IMR-90 (cell line): ENCODE measurements at regions of chr6 and their contacts with region 1.

Region 1: GRCh38 chr6:28225056-28225834 is at the start of gene ZSCAN9:
- DNase-seq: peak; percentile 89
- ATAC-seq: peak; percentile 93
- H3K4me3 ChIP-seq: peak within 1 kb of the TSS; percentile 82
- H3K27ac ChIP-seq: peak within 1 kb of the TSS; percentile 61
- H3K4me1 ChIP-seq: no peaks in the 10 kb centered on the region
- H3K27me3 ChIP-seq: no peaks in the 10 kb centered on the region
- CTCF ChIP-seq: no peak
- POLR2A ChIP-seq: no peak
- RAD21 ChIP-seq: 0 out of 2 replicates have a peak, but pooled peaks have one; percentile 10
- total RNA-seq, gene ZSCAN9: 16.9 and 17.7 TPM in 2 replicates

Region 2: GRCh38 chr6:28235912-28236452 is 10.7 kb after region 1 on chr6:
- CTCF ChIA-PET with region 1: interaction called, 4 read pairs
- POLR2A ChIA-PET with region 1: interaction called, 17 read pairs
- dilution Hi-C with region 1: no loop called
- in situ Hi-C with region 1: no loop called
- intact Hi-C with region 1: no loop called
- DNase-seq: no peak
- ATAC-seq: no peak
- H3K4me3 ChIP-seq: no peak overlapping the region
- H3K27ac ChIP-seq: no peak overlapping the region
- H3K4me1 ChIP-seq: no peaks in the 10 kb centered on the region
- H3K27me3 ChIP-seq: no peaks in the 10 kb centered on the region
- CTCF ChIP-seq: no peak
- POLR2A ChIP-seq: no peak
- RAD21 ChIP-seq: no peak

Region 3: DNA sequence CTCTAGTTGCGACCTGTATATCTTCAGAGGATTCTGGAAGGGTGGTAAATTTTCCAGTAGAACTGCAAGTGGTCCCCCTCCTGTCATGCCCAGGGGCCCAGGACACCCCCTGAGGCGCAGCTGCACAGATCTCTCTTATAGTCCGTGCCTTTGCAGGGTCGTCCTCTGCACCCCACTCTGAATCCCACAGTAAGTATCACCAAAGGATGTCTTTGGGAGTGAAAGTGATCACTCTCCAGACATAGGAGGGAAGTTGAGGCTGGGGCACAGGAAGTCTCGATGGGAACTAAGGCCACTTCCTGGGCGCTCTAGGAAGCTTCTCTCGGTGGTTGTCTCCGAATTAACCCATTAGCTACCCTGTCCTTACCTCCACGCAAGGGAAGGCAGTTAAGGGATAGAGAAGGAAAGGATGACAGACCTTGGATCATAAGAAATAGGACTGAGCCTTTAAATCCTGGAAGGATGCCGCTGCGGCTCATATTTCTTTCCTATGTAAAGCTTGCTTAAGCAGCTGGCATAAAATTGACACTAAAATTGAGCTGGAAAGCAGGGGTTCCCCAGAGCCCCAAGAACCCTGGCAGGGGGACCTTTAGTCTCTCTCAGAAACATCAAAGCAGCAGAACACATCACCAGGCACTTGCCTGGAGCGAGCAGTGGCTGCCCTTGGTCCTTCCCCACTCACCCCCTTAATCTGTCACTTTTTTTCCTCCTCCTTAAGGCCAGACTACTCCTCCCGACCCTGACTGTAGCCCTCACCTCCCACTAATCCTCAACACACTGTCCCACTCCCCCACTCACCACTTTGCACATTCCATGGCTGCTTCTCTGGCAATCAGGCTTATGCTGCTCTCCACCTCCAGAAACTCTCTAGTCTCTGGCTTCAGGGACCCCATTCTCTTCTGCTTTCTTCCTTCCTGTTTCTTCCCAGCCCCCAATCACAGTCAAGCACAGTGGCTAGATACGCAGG is 27.0 kb after region 1 on chr6 and contains the start of gene ZKSCAN4:
- CTCF ChIA-PET with region 1: no interaction called
- POLR2A ChIA-PET with region 1: no interaction called
- dilution Hi-C with region 1: no loop called
- in situ Hi-C with region 1: no loop called
- intact Hi-C with region 1: loop called (anchors 1 kb)
- DNase-seq: peak; percentile 92
- ATAC-seq: peak; percentile 96
- H3K4me3 ChIP-seq: peak within 1 kb of the TSS; percentile 58
- H3K27ac ChIP-seq: peak within 1 kb of the TSS; percentile 59
- H3K4me1 ChIP-seq: peaks cover 7% of the 10 kb centered on the region
- H3K27me3 ChIP-seq: no peaks in the 10 kb centered on the region
- CTCF ChIP-seq: no peak
- POLR2A ChIP-seq: no peak
- RAD21 ChIP-seq: peak; percentile 27; the same call in 1 of the 2 replicates
- total RNA-seq, gene ZKSCAN4: 4.7 and 5.7 TPM in 2 replicates

Region 4: DNA sequence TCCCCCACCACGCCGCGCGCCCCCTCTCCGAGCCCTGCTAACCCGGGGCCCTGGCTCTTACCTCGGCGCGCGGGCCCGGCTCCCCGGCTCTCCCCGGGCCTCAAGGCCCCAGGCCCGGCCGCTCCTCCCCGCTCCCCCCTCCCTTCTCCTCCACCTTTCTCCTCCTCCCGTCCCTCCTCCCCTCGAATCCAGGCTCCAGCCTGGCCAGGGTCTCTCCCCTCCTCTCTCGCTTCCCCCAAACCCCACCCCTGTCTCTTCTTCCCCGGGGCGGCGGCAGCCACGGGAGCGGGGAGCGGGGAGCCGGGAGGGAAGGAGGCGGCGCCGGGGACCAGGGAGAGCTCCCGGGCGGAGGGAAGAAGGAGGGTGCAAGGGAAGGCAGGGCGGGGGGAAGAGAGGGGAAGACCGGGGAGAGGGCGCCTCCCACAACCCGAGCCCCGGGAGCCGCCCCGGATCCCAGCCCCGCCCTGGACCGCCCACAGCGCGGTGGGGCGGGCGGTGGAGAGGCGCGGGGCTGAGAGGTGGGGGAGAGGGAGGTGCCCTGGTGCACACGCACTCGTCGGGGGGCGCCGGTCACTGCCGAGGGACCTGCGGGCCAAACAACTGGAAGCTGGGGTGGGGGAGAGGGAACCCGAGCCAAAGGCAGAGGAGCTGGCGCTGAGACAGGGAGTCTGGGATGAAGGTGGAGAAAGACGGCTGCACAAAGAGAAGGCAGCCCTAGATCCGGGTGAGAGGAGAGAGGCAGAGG is 1407.7 kb after region 1 on chr6 and contains the start of gene GABBR1:
- CTCF ChIA-PET with region 1: no interaction called
- POLR2A ChIA-PET with region 1: no interaction called
- dilution Hi-C with region 1: no loop called
- in situ Hi-C with region 1: no loop called
- intact Hi-C with region 1: loop called (anchors 5 kb)
- DNase-seq: peak; percentile 79
- ATAC-seq: peak; percentile 90
- H3K4me3 ChIP-seq: peak within 1 kb of the TSS; percentile 77
- H3K27ac ChIP-seq: peak within 1 kb of the TSS; percentile 62
- H3K4me1 ChIP-seq: peaks cover 11% of the 10 kb centered on the region
- H3K27me3 ChIP-seq: no peaks in the 10 kb centered on the region
- CTCF ChIP-seq: no peak
- POLR2A ChIP-seq: no peak
- RAD21 ChIP-seq: no peak
- total RNA-seq, gene GABBR1: 5.9 and 6.9 TPM in 2 replicates